Right cardiac atrium (tissue), 5 donors: ENCODE measurements at regions of chr11 and their contacts with region 1.

Region 1: GRCh38 chr11:65329944-65330403 is 3.7 kb upstream of the DPF2 start:
- DNase-seq: peak; percentile 77 to 90 (median 83)
- ATAC-seq: peak; percentile 29 to 35
- H3K4me3 ChIP-seq: no peak overlapping the region
- H3K27ac ChIP-seq: no peak overlapping the region
- H3K4me1 ChIP-seq: no peaks in the 10 kb centered on the region
- H3K27me3 ChIP-seq: no peaks in the 10 kb centered on the region

Region 2: GRCh38 chr11:65274735-65275682 is 55.0 kb before region 1 on chr11:
- intact Hi-C with region 1: loop called in 1 of 4 experiments (anchors 5 kb)
- DNase-seq: peak; percentile 76 to 79 (median 78)
- ATAC-seq: peak; percentile 91 to 93
- H3K4me3 ChIP-seq: no peak overlapping the region
- H3K27ac ChIP-seq: no peak overlapping the region
- H3K4me1 ChIP-seq: no peaks in the 10 kb centered on the region
- H3K27me3 ChIP-seq: no peaks in the 10 kb centered on the region

Region 3: DNA sequence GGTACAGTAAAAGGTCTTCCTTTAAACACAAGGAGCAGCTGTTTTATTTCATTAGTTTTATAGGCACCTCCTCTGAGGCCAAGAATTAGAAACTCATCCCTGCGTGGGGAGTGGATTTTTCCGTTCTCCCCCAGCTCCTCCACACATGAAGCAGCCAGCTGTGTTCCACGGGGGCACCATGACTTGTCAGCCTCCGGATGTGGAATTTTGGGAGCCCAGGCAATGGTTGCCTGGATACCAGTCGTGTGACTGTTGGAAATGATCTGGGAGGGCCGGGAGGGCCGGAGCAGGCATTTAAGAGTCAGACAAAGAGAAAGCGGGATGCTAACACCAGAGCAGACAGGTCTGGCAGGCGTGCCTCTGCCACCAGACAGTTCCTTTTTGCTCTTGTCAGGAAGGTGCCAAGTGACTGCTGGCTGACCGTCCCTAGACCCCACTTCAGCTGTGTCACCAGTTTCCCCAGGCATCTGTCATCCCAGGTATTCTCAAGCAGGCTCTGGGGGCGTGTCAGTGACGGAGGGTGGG is 31.3 kb before region 1 on chr11:
- intact Hi-C with region 1: loop called in 1 of 4 experiments (anchors 2 kb)
- DNase-seq: peak; percentile 80 to 89 (median 88)
- ATAC-seq: peak; percentile 61 to 69
- H3K4me3 ChIP-seq: no peak overlapping the region
- H3K27ac ChIP-seq: peak overlapping the region; percentile 94
- H3K4me1 ChIP-seq: peaks cover 20% of the 10 kb centered on the region
- H3K27me3 ChIP-seq: no peaks in the 10 kb centered on the region